Pancreas (tissue), 10 donors: ENCODE measurements at regions of chr13 and their contacts with region 1.

Region 1: DNA sequence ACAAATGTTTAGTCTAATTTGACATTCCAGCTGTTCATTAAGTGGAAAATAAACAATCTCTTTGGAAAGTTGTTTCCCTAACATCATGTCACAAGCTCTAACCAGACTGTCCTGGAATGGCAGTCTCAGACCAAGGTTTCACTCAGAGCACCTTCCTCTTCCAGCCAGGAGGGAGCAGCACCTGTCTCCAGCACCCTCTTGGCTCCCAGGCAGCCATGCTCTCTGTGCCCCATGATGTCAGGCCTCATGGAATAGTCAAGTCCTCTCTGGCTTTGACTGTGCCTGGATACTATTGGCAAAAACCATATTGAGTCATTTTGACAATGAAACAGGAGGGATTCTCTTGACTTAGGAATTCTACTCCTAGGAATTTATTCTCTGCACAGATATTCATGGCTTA is 171.4 kb downstream of the OXGR1 start:
- DNase-seq: peak in 3 of 6 donors; percentile 7 to 33 (median 21)
- ATAC-seq: peak; percentile 55 to 91 (median 88)
- H3K4me3 ChIP-seq: no peak overlapping the region
- H3K27ac ChIP-seq: no peak overlapping the region
- H3K4me1 ChIP-seq: no peaks in the 10 kb centered on the region
- H3K27me3 ChIP-seq: no peaks in the 10 kb centered on the region
- CTCF ChIP-seq: no peak

Region 2: GRCh38 chr13:96018135-96018534 is 804.8 kb before region 1 on chr13:
- intact Hi-C with region 1: loop called in 1 of 3 experiments (anchors 5 kb)
- DNase-seq: no peak
- ATAC-seq: no peak
- H3K4me3 ChIP-seq: no peak overlapping the region
- H3K27ac ChIP-seq: no peak overlapping the region
- H3K4me1 ChIP-seq: peaks cover 7 to 26% (median 10%) of the 10 kb centered on the region in 3 donors
- H3K27me3 ChIP-seq: no peaks in the 10 kb centered on the region
- CTCF ChIP-seq: no peak

Region 3: DNA sequence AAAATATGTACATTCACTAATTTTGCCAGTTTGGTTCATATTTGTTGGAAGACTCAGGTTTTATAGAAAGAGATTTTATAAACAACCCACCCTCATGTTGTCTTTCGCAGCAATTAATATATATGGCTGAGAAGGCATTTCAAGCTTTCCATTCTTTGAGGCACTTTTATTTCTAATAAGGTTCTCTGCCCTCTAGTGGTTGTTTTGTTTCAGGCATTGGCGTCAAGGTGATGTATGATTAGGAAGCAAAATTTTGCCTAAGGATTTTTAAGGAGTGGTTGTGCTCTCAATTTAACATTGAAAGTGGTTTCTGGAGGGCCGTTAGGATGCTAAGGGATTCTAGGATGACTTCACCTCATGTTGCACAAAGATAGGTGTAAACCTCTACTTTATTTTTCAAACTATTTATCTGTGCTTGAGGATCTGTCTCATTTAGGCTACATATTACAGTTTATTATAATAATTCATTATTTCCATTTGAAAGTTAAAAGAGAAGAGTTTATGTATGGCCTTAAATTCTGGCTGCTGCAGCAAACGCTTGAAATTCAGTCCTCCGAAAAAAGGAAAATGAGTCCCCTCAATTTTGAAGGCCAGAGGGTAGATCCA is 135.5 kb after region 1 on chr13:
- intact Hi-C with region 1: loop called in 1 of 3 experiments (anchors 5 kb)
- DNase-seq: peak in 1 of 6 donors; percentile 24
- ATAC-seq: peak in 3 of 4 donors; percentile 70 to 79 (median 76)
- H3K4me3 ChIP-seq: no peak overlapping the region
- H3K27ac ChIP-seq: no peak overlapping the region
- H3K4me1 ChIP-seq: no peaks in the 10 kb centered on the region
- H3K27me3 ChIP-seq: no peaks in the 10 kb centered on the region
- CTCF ChIP-seq: peak; percentile 52 to 78 (median 62)

Region 4: GRCh38 chr13:97934590-97934989 is 1111.7 kb after region 1 on chr13:
- intact Hi-C with region 1: no loop called
- DNase-seq: no peak
- ATAC-seq: no peak
- H3K4me3 ChIP-seq: no peak overlapping the region
- H3K27ac ChIP-seq: no peak overlapping the region
- H3K4me1 ChIP-seq: peaks cover 0 to 4% (median 0%) of the 10 kb centered on the region in 3 donors
- H3K27me3 ChIP-seq: no peaks in the 10 kb centered on the region
- CTCF ChIP-seq: no peak